PC-9 (cell line): ENCODE measurements at regions of chr5 and their contacts with region 1.

Region 1: GRCh38 chr5:134784241-134784920 is 25.8 kb downstream of the DDX46 start:
- DNase-seq: no peak
- H3K4me3 ChIP-seq: no peak overlapping the region
- H3K27ac ChIP-seq: no peak overlapping the region
- H3K4me1 ChIP-seq: no peaks in the 10 kb centered on the region
- H3K27me3 ChIP-seq: no peaks in the 10 kb centered on the region
- CTCF ChIP-seq: 0 out of 2 replicates have a peak, but pooled peaks have one; percentile 24

Region 2: GRCh38 chr5:134240421-134240962 is 543.9 kb before region 1 on chr5:
- CTCF ChIA-PET with region 1: no interaction called
- POLR2A ChIA-PET with region 1: no interaction called
- intact Hi-C with region 1: no loop called
- DNase-seq: no peak
- H3K4me3 ChIP-seq: no peak overlapping the region
- H3K27ac ChIP-seq: no peak overlapping the region
- H3K4me1 ChIP-seq: peaks cover 18% of the 10 kb centered on the region
- H3K27me3 ChIP-seq: no peaks in the 10 kb centered on the region
- CTCF ChIP-seq: no peak

Region 3: DNA sequence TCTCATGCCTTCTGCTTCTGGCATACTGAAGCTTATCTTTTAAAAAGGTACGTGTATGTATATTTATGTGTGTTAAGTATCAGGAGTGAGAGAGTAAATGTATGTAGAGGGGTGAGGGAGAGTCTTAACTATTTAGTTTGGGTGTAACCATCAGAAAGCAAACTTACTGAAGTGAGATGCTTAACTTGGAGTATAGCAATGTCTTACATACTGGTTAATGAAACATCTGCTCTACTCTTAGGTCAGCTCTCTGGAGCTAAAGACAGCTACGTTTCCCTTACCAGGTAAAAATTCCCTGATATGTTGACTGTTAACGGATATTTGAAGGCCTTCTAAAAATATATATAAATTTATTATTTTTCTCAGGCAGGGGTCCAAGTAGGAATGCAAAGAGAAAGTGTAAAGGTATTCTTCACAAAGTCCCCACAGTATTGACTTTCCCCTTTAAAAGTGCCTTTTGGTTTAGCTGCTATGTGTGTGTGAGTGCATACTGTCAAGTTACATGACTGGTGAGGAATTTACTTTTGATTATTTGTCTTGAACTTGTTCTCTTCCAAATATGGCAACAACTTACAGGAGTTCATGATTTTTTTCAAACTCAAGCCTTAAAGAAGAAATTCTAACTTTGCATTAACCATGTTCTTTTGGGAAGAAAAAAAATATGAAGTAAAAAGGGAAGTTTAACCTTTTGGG is 49.1 kb after region 1 on chr5:
- CTCF ChIA-PET with region 1: no interaction called
- POLR2A ChIA-PET with region 1: no interaction called
- intact Hi-C with region 1: loop called (anchors 10 kb)
- DNase-seq: no peak
- H3K4me3 ChIP-seq: no peak overlapping the region
- H3K27ac ChIP-seq: no peak overlapping the region
- H3K4me1 ChIP-seq: no peaks in the 10 kb centered on the region
- H3K27me3 ChIP-seq: no peaks in the 10 kb centered on the region
- CTCF ChIP-seq: no peak